Activated CD8-positive, alpha-beta memory T cell treated with anti-CD3 and anti-CD28 coated beads, Interleukin-2, amount 10 ng/mL, durations not matched to agents 7 days and 5 days (primary cell): ENCODE measurements at regions of chr11 and their contacts with region 1.

Region 1: GRCh38 chr11:35138943-35139721 is at the start of gene CD44:
- DNase-seq: peak; percentile 80
- ATAC-seq: peak; percentile 68
- H3K4me3 Mint-ChIP-seq: peak within 1 kb of the TSS; percentile 90
- H3K27ac Mint-ChIP-seq: peak within 1 kb of the TSS; percentile 92
- H3K4me1 Mint-ChIP-seq: peaks cover 50% of the 10 kb centered on the region
- H3K27me3 Mint-ChIP-seq: peaks cover 10% of the 10 kb centered on the region
- total RNA-seq, gene CD44: 212 to 294 TPM

Region 2: GRCh38 chr11:35045236-35045820 is 93.8 kb before region 1 on chr11:
- CTCF ChIA-PET with region 1: interaction called, 10 read pairs
- DNase-seq: peak; percentile 87
- ATAC-seq: peak; percentile 80
- H3K4me3 Mint-ChIP-seq: peak overlapping the region; percentile 61
- H3K27ac Mint-ChIP-seq: peak overlapping the region; percentile 70
- H3K4me1 Mint-ChIP-seq: peaks cover 68% of the 10 kb centered on the region
- H3K27me3 Mint-ChIP-seq: peaks cover 2% of the 10 kb centered on the region

Region 3: DNA sequence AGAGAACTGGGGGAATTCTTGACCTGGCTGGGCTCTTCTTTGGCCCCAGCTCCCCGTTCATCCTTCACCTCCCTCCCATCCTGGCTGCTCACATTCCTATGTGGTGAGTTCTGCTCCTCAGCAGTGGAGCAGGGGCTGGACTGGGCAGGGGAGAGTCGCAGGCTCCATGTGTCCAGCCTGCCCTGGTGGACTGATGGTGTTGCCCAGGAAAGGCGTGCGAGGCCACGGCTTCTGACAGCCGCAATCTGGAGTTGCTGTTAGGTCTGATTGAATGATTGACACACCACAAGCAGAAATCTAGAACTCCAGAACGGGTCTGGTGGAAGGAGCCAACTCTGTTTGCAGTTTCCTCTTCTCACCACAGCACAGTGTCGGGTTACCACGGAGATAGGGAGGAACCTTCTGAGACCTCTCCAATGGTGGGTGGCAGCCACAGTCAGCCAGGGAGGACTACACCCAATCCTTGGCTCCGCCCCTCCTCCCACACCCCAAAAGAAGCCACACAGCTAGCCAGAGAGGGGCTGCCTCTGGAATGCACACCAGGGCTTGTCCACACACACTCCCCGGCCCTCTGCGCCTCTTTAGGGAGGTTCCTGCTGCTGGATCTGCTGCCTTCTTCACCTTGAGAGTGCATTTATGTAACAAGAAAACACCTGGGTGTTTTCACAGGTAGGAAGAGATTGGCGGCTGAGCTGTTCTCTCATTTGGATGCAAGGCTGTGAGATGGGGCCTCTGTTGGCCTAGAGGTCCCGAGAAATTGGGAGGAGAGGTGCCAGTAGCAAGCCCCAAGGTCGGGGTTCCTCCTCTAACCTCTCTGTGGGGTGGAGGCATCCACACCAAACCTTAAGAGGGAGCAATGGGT is 56.6 kb before region 1 on chr11:
- CTCF ChIA-PET with region 1: interaction called, 11 read pairs
- DNase-seq: peak; percentile 94
- ATAC-seq: peak; percentile 79
- H3K4me3 Mint-ChIP-seq: peak overlapping the region; percentile 51
- H3K27ac Mint-ChIP-seq: peak overlapping the region; percentile 87
- H3K4me1 Mint-ChIP-seq: peaks cover 78% of the 10 kb centered on the region
- H3K27me3 Mint-ChIP-seq: no peaks in the 10 kb centered on the region

Region 4: GRCh38 chr11:35100013-35100383 is 39.1 kb before region 1 on chr11:
- CTCF ChIA-PET with region 1: no interaction called
- DNase-seq: no peak
- ATAC-seq: no peak
- H3K4me3 Mint-ChIP-seq: no peak overlapping the region
- H3K27ac Mint-ChIP-seq: no peak overlapping the region
- H3K4me1 Mint-ChIP-seq: peaks cover 13% of the 10 kb centered on the region
- H3K27me3 Mint-ChIP-seq: no peaks in the 10 kb centered on the region

Region 5: GRCh38 chr11:35207471-35208403 is 68.6 kb after region 1 on chr11:
- CTCF ChIA-PET with region 1: no interaction called
- DNase-seq: no peak
- ATAC-seq: no peak
- H3K4me3 Mint-ChIP-seq: no peak overlapping the region
- H3K27ac Mint-ChIP-seq: no peak overlapping the region
- H3K4me1 Mint-ChIP-seq: peaks cover 2% of the 10 kb centered on the region
- H3K27me3 Mint-ChIP-seq: no peaks in the 10 kb centered on the region